Dorsolateral prefrontal cortex (tissue), 120 donors: ENCODE measurements at regions of chr22 and their contacts with region 1.

Region 1: DNA sequence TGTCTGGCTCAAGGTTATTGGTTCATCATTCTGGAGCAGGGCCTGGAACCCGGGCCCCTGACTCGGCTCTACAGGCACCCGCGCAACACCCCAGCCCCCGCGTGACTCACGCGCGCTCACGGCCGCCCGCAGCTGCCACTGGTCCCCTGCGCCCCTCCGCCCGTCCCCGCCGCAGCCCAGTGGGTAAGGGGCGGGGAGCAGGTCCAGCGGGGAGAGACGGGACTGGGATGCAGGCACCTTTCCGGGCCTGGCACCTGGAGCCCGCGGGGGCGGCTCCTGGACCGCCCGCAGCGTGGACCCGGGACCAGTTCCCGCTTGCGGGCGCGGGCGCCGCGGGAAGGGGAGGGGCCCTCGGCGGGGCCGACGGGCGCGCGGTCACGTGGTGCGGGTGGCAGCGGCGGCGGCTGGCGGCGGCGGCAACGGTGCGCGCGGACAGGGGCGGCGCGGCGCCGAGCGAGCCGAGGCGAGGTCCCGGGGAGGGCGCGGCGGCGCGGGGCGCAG is 7.2 kb downstream of the SEPTIN3 start:
- DNase-seq: peak in 8 of 10 donors; percentile 45 to 85 (median 68)
- H3K4me3 ChIP-seq: peak overlapping the region; percentile 45 to 83 (median 71)
- H3K27ac ChIP-seq: peak overlapping the region in 55 of 59 donors; percentile 50 to 92 (median 83)
- H3K27me3 ChIP-seq: no peaks in the 10 kb centered on the region
- CTCF ChIP-seq: no peak

Region 2: GRCh38 chr22:42090596-42091454 is 114.4 kb after region 1 on chr22 and contains the start of gene NDUFA6:
- intact Hi-C with region 1: loop called in 1 of 2 experiments (anchors 5 kb)
- DNase-seq: peak; percentile 99
- H3K4me3 ChIP-seq: peak within 1 kb of the TSS; percentile 66 to 99 (median 92)
- H3K27ac ChIP-seq: peak within 1 kb of the TSS; percentile 73 to 99 (median 94)
- H3K27me3 ChIP-seq: no peaks in the 10 kb centered on the region
- CTCF ChIP-seq: peak; percentile 74 to 99 (median 96)
- total RNA-seq, gene NDUFA6: 33.6 to 81.3 (median 55.8) TPM